ENCODE measurements at regions of chr7 and their contacts with region 1.

Region 1: GRCh38 chr7:124168616-124169015 is 135.7 kb upstream of the TMEM229A start:
- DNase-seq: no peak
- H3K4me3 ChIP-seq: no peak overlapping the region
- H3K27ac ChIP-seq: no peak overlapping the region
- H3K4me1 ChIP-seq: no peaks in the 10 kb centered on the region
- H3K27me3 ChIP-seq: no peaks in the 10 kb centered on the region
- CTCF ChIP-seq: no peak

Region 2: GRCh38 chr7:124072603-124073309 is 95.9 kb before region 1 on chr7:
- intact Hi-C with region 1: no loop called
- DNase-seq: no peak
- H3K4me3 ChIP-seq: no peak overlapping the region
- H3K27ac ChIP-seq: no peak overlapping the region
- H3K4me1 ChIP-seq: no peaks in the 10 kb centered on the region
- H3K27me3 ChIP-seq: no peaks in the 10 kb centered on the region
- CTCF ChIP-seq: no peak

Region 3: DNA sequence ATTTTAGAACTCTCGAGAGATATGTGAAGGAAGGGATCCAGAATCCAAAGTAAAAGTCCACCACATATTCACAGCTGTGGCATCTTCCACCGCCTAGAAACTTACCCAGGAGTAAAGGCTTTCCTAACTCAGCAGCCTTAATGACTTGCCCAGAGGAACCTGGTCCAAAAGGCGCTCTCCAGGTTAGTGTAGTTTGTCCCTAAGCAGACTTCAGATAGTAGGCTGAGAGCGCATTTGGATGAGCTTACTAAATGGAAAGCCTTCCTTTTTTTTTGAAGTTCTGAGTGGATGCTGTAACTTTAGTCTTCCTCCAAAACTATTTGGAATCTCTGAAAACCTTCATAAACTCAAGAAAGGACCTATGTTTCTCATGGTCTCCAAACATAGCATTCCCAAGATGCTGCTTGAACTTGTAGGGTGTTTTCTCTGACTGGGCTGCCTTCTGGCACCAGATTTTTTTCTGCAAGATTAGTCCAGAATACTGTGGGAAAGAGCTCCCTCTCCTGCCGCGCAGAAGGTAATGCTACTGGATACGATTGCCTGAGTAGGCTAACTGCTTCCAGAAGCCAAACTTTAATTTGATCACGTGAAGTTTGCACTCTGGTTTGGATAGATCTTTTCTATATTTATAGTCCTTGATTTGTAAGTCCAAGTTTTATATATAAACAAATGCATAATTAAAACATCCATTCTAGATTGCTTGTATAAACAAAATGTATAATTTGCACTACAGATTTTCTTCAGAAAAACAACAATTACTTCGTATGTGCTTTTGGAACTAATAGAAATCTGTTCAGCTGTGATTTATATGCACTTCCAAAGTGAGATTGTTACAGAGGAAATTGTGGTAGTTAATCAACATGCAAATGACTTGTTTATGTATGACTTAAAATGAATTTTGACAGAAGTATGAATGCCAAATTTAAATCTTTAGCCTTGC is 616.5 kb after region 1 on chr7:
- intact Hi-C with region 1: loop called (anchors 5 kb)
- DNase-seq: no peak
- H3K4me3 ChIP-seq: no peak overlapping the region
- H3K27ac ChIP-seq: no peak overlapping the region
- H3K4me1 ChIP-seq: no peaks in the 10 kb centered on the region
- H3K27me3 ChIP-seq: peaks cover 3% of the 10 kb centered on the region
- CTCF ChIP-seq: peak; percentile 74

Measured in left ventricle myocardium inferior (tissue), 1 donor.